Heart left ventricle (tissue), 16 donors: ENCODE measurements at regions of chr9 and their contacts with region 1.

Region 1: DNA sequence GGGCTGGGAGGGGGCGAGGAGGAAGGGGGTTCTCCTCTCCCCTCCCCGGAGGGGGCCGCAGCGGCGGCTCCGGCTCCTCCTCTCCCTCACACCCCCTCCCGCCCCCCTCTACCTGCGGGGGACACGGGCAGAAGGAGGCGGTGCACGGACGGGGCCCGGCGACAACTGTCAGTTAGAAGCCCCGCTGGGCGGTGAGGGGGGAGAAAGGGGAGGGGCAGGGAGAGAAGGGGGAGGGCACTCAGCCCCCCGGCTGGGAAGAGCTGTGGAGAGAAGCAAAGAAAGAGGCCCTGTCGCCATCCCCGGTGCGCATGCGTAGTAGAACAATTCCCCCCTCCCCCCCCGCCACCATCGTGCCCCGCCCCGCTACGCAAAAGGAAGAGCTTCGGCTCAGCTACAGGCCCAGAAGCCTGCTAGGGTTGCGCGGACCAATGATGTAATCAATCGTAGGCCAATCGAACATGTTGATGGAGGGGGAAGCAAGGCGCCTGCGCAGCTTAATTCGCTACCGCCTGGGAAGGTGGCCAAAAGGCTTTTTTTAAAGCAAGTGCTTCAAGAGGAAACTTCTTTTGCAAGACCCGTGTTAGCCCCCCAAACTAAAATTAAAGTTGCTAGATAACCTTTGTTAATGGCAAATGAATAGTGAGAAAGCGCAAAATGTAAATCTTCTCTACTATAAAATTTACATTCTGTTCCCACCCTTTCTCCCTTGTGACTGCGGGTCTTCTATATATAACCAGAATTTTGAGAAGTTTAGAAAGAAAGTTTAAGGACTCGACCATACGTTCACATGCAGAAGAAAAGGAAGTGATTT is 7.0 kb downstream of the RANBP6 start:
- DNase-seq: peak; percentile 95 to 97 (median 97)
- ATAC-seq: peak; percentile 90 to 97 (median 94)
- H3K4me3 ChIP-seq: peak overlapping the region; percentile 67 to 95 (median 86)
- H3K27ac ChIP-seq: peak overlapping the region; percentile 92 to 99 (median 96)
- H3K4me1 ChIP-seq: peaks cover 0 to 64% (median 49%) of the 10 kb centered on the region in 12 donors
- H3K27me3 ChIP-seq: no peaks in the 10 kb centered on the region
- CTCF ChIP-seq: no peak
- POLR2A ChIP-seq: peak in 1 of 2 donors; percentile 7

Region 2: GRCh38 chr9:5939530-5939929 is 68.8 kb before region 1 on chr9:
- intact Hi-C with region 1: loop called in 1 of 10 experiments (anchors 10 kb)
- DNase-seq: no peak
- ATAC-seq: no peak
- H3K4me3 ChIP-seq: no peak overlapping the region
- H3K27ac ChIP-seq: no peak overlapping the region
- H3K4me1 ChIP-seq: no peaks in the 10 kb centered on the region
- H3K27me3 ChIP-seq: no peaks in the 10 kb centered on the region
- CTCF ChIP-seq: no peak
- POLR2A ChIP-seq: no peak

Region 3: DNA sequence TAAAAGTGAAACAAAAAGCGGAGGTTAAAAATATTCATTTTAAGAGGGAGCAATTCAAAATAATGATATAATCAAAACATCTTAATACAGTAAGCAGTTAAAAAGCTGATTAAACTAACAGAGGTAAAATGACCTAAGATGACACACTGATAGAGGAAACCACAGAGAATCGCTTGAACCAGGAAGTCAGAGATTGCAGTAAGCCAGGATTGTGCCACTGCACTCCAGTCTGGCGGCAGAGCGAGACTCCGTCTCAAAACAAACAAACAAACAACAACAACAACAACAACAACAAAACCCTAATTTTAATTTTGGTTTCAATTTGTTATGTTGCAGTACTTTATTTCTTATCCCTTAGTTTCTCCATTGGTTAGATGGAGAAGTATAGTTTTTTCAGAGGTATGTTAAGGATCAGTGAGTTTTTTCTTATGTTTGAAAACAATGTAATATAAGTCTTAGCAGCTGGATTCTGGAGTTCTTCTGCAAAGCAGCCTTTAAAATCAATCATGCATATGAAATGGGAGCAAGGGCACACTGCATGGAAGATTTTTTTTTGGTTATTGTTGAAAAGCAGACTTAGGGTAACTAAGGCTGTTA is 59.2 kb before region 1 on chr9:
- intact Hi-C with region 1: loop called in 1 of 10 experiments (anchors 5 kb)
- DNase-seq: no peak
- ATAC-seq: peak in 1 of 4 donors; percentile 50
- H3K4me3 ChIP-seq: peak overlapping the region in 7 of 12 donors; percentile 5 to 36 (median 24)
- H3K27ac ChIP-seq: no peak overlapping the region
- H3K4me1 ChIP-seq: peaks cover 0 to 25% (median 8%) of the 10 kb centered on the region in 12 donors
- H3K27me3 ChIP-seq: no peaks in the 10 kb centered on the region
- CTCF ChIP-seq: no peak
- POLR2A ChIP-seq: no peak

Region 4: DNA sequence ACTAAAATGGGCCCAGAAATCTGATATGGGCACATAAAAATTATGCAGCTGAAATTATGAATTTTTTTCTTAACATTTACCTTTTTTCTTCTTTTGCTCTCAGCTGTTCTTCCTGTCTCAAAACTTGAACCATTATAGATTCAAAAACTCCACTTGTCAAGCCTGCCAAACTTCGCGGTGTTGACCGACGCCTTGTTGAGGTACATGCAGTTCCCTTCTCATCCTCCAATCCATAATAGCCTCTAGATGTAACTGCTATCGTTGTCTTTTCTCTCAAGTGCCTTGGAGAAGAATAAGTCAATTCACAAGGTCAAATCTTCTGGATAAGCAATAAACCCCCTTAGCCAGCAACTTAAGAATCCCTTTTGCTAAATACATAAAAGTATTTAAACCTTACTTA is 20.1 kb before region 1 on chr9:
- intact Hi-C with region 1: loop called in 1 of 10 experiments (anchors 1 kb)
- DNase-seq: peak in 2 of 5 donors; percentile 37 to 57
- ATAC-seq: peak; percentile 76 to 92 (median 88)
- H3K4me3 ChIP-seq: peak overlapping the region in 1 of 12 donors; percentile 3
- H3K27ac ChIP-seq: peak overlapping the region in 4 of 12 donors; percentile 0 to 63 (median 48)
- H3K4me1 ChIP-seq: peaks cover 0 to 10% (median under 1%) of the 10 kb centered on the region in 12 donors
- H3K27me3 ChIP-seq: no peaks in the 10 kb centered on the region
- CTCF ChIP-seq: peak in 1 of 12 donors; percentile 27
- POLR2A ChIP-seq: no peak

Region 5: DNA sequence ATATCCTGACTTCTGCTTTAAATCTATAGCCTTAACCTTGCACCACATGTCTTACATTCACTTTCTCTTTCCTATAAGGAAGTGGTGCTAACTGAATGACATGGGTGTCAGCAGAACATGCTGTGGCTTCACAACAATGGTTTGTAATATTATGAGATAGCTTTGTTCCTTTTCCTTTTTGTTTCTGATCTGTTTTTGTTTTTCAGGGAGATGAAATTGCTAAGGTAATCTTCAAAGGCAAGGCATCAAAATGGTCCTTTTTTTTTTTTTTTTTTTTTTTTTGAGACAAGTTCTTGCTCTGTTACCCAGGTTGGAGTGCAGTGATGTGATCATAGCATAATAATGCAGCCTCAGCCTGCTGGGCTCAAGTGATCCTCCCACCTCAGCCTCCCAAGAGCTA is 60.6 kb after region 1 on chr9:
- intact Hi-C with region 1: no loop called
- DNase-seq: no peak
- ATAC-seq: peak in 2 of 4 donors; percentile 48 to 59
- H3K4me3 ChIP-seq: no peak overlapping the region
- H3K27ac ChIP-seq: peak overlapping the region in 1 of 12 donors; percentile 64
- H3K4me1 ChIP-seq: peaks cover 0 to 13% (median 0%) of the 10 kb centered on the region in 12 donors
- H3K27me3 ChIP-seq: peaks cover 0 to 1% (median 0%) of the 10 kb centered on the region in 9 donors
- CTCF ChIP-seq: no peak
- POLR2A ChIP-seq: no peak

Region 6: DNA sequence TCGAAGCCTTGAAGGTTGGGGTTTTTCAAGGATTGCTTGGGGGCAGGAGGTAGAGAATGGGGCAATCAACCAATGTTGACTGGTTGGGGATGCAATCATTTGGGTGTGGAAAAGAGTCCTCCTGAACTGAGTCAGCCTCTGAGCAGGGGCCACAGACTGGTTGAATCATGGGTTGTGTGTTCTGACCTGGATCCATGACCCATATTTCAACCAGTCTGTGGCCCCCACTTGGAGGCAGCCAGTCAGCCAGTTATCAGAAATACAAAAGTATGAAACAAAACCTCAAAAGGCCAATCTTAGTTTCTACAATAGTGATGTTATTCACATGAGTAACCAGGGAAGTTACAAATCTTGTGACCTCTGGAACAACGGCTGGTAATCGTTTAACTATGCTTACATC is 88.4 kb after region 1 on chr9:
- intact Hi-C with region 1: no loop called
- DNase-seq: no peak
- ATAC-seq: no peak
- H3K4me3 ChIP-seq: no peak overlapping the region
- H3K27ac ChIP-seq: no peak overlapping the region
- H3K4me1 ChIP-seq: no peaks in the 10 kb centered on the region
- H3K27me3 ChIP-seq: no peaks in the 10 kb centered on the region
- CTCF ChIP-seq: no peak
- POLR2A ChIP-seq: no peak